Activated B cell treated with CpG ODN at 0.5 μM for 24 hours (primary cell): ENCODE measurements at regions of chr19 and their contacts with region 1.

Region 1: GRCh38 chr19:54316746-54317107 is 3.8 kb upstream of the LILRA5 start:
- DNase-seq: no peak
- ATAC-seq: no peak
- H3K4me3 Mint-ChIP-seq: no peak overlapping the region
- H3K27ac Mint-ChIP-seq: no peak overlapping the region
- H3K4me1 Mint-ChIP-seq: peaks cover 52% of the 10 kb centered on the region
- H3K27me3 Mint-ChIP-seq: peaks cover 13% of the 10 kb centered on the region
- CTCF ChIP-seq: no peak

Region 2: GRCh38 chr19:54231077-54231931 is 85.4 kb before region 1 on chr19:
- CTCF ChIA-PET with region 1: no interaction called
- POLR2A ChIA-PET with region 1: no interaction called
- intact Hi-C with region 1: no loop called
- DNase-seq: peak; percentile 73
- ATAC-seq: peak; percentile 96
- H3K4me3 Mint-ChIP-seq: no peak overlapping the region
- H3K27ac Mint-ChIP-seq: no peak overlapping the region
- H3K4me1 Mint-ChIP-seq: peaks cover 6% of the 10 kb centered on the region
- H3K27me3 Mint-ChIP-seq: peaks cover 44% of the 10 kb centered on the region
- CTCF ChIP-seq: no peak

Region 3: GRCh38 chr19:54281007-54281728 is 35.6 kb before region 1 on chr19 and contains the start of gene LILRB2:
- CTCF ChIA-PET with region 1: no interaction called
- POLR2A ChIA-PET with region 1: interaction called, 7 read pairs
- intact Hi-C with region 1: loop called (anchors 5 kb)
- DNase-seq: no peak
- ATAC-seq: no peak
- H3K4me3 Mint-ChIP-seq: peak within 1 kb of the TSS; percentile 79
- H3K27ac Mint-ChIP-seq: peak within 1 kb of the TSS; percentile 67
- H3K4me1 Mint-ChIP-seq: peaks cover 68% of the 10 kb centered on the region
- H3K27me3 Mint-ChIP-seq: peaks cover 7% of the 10 kb centered on the region
- CTCF ChIP-seq: no peak
- total RNA-seq, gene LILRB2: 7.6 and 7.9 TPM in 2 replicates

Region 4: GRCh38 chr19:54287456-54287855 is 29.3 kb before region 1 on chr19:
- CTCF ChIA-PET with region 1: no interaction called
- POLR2A ChIA-PET with region 1: interaction called, 10 read pairs
- intact Hi-C with region 1: loop called (anchors 5 kb)
- DNase-seq: no peak
- ATAC-seq: no peak
- H3K4me3 Mint-ChIP-seq: no peak overlapping the region
- H3K27ac Mint-ChIP-seq: no peak overlapping the region
- H3K4me1 Mint-ChIP-seq: peaks cover 83% of the 10 kb centered on the region
- H3K27me3 Mint-ChIP-seq: peaks cover 3% of the 10 kb centered on the region
- CTCF ChIP-seq: no peak

Region 5: GRCh38 chr19:54551950-54552912 is 235.5 kb after region 1 on chr19:
- CTCF ChIA-PET with region 1: no interaction called
- POLR2A ChIA-PET with region 1: no interaction called
- intact Hi-C with region 1: no loop called
- DNase-seq: no peak
- ATAC-seq: no peak
- H3K4me3 Mint-ChIP-seq: no peak overlapping the region
- H3K27ac Mint-ChIP-seq: no peak overlapping the region
- H3K4me1 Mint-ChIP-seq: peaks cover 15% of the 10 kb centered on the region
- H3K27me3 Mint-ChIP-seq: peaks cover 11% of the 10 kb centered on the region
- CTCF ChIP-seq: no peak